GM12878 (cell line): ENCODE measurements at regions of chr16 and their contacts with region 1.

Region 1: DNA sequence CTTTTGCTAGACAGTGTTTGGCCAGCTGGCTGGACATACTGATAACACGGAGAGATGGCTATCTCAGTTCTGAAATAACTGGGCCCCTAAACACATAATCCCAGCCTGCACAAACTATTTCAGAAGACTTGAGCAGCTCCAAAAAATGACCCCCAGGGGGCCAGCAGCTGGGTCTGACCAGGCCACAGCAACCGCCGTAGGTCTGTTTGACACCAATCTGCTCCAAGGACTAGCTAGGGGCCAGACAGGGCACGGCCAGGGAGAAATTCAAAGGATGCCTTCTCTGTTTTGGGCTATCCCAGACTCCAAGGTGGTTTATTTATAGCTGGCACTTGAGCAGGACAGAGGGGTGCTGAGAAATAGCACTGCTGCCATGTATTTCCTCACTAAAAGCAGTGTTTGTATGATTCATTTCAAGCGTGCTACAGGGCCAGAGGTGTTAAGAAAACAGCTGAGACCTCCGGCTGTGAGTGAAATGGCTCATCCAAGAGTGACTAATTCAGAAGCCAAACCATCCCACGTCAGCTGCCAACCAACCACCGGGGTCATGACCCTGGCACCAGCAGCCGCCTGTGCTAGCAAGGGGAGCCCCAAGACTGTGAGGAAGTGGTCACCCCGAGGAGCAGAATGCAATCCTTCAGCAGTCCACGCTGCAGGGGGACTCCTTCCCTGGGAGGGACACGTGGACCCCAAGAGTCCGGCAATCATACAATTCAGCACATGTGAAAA is 5.7 kb downstream of the GGA2 start:
- DNase-seq: peak; percentile 77
- ATAC-seq: peak; percentile 76
- H3K4me3 ChIP-seq: peak overlapping the region; percentile 68
- H3K27ac ChIP-seq: peak overlapping the region; percentile 86
- H3K4me1 ChIP-seq: peaks cover 48% of the 10 kb centered on the region
- H3K27me3 ChIP-seq: no peaks in the 10 kb centered on the region
- CTCF ChIP-seq: 0 out of 6 replicates have a peak, but pooled peaks of 1 of the 3 experiments have one; percentile 23
- EP300 ChIP-seq: peak; percentile 73 to 86; a peak in 3 of 4 replicates
- POLR2A ChIP-seq: peak; percentile 31; the same call in 1 of the 2 replicates
- RAD21 ChIP-seq: no peak

Region 2: DNA sequence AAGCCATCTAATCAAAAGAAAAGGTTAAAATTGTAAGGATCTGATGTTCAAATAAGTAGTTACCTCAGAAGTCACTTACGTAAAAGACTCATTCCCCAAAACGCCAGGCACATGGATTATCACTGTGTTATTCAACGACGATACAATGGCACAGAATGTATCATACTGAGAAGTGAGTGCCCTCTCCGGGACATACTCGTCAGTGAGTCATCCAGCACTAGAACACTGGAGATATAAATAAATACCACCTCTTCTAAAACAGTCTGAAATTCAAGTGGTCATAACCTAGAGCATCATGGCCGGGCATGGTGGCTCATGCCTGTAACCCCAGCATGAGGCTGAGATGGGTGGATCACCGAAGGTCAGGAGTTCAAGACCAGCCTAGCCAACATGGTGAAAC is 380.3 kb before region 1 on chr16:
- CTCF ChIA-PET with region 1: no interaction called
- POLR2A ChIA-PET with region 1: no interaction called
- RAD21 ChIA-PET with region 1: no interaction called
- SMC1A ChIA-PET with region 1: no interaction called
- in situ Hi-C with region 1: no loop called
- intact Hi-C with region 1: no loop called
- DNase-seq: no peak
- ATAC-seq: no peak
- H3K4me3 ChIP-seq: no peak overlapping the region
- H3K27ac ChIP-seq: no peak overlapping the region
- H3K4me1 ChIP-seq: no peaks in the 10 kb centered on the region
- H3K27me3 ChIP-seq: no peaks in the 10 kb centered on the region
- CTCF ChIP-seq: no peak
- EP300 ChIP-seq: no peak
- POLR2A ChIP-seq: no peak
- RAD21 ChIP-seq: no peak

Region 3: GRCh38 chr16:23227529-23227928 is 277.1 kb before region 1 on chr16:
- CTCF ChIA-PET with region 1: no interaction called
- POLR2A ChIA-PET with region 1: no interaction called
- RAD21 ChIA-PET with region 1: no interaction called
- SMC1A ChIA-PET with region 1: no interaction called
- in situ Hi-C with region 1: no loop called
- intact Hi-C with region 1: no loop called
- DNase-seq: no peak
- ATAC-seq: no peak
- H3K4me3 ChIP-seq: no peak overlapping the region
- H3K27ac ChIP-seq: no peak overlapping the region
- H3K4me1 ChIP-seq: no peaks in the 10 kb centered on the region
- H3K27me3 ChIP-seq: no peaks in the 10 kb centered on the region; a peak in 1 of 4 replicates
- CTCF ChIP-seq: no peak
- EP300 ChIP-seq: no peak
- POLR2A ChIP-seq: no peak
- RAD21 ChIP-seq: no peak

Region 4: GRCh38 chr16:23296994-23297393 is 207.6 kb before region 1 on chr16:
- CTCF ChIA-PET with region 1: no interaction called
- POLR2A ChIA-PET with region 1: no interaction called
- RAD21 ChIA-PET with region 1: no interaction called
- SMC1A ChIA-PET with region 1: no interaction called
- in situ Hi-C with region 1: no loop called
- intact Hi-C with region 1: loop called (anchors 5 kb)
- DNase-seq: no peak
- ATAC-seq: peak; percentile 77
- H3K4me3 ChIP-seq: no peak overlapping the region
- H3K27ac ChIP-seq: no peak overlapping the region
- H3K4me1 ChIP-seq: peaks cover 7% of the 10 kb centered on the region; the same call in 1 of the 2 replicates
- H3K27me3 ChIP-seq: peaks cover 0 to 3% of the 10 kb centered on the region in 2 experiments; a peak in 2 of 4 replicates
- CTCF ChIP-seq: peak; percentile 32 to 48 (median 37); a peak in 4 of 6 replicates
- EP300 ChIP-seq: no peak
- POLR2A ChIP-seq: no peak
- RAD21 ChIP-seq: peak; percentile 63

Region 5: DNA sequence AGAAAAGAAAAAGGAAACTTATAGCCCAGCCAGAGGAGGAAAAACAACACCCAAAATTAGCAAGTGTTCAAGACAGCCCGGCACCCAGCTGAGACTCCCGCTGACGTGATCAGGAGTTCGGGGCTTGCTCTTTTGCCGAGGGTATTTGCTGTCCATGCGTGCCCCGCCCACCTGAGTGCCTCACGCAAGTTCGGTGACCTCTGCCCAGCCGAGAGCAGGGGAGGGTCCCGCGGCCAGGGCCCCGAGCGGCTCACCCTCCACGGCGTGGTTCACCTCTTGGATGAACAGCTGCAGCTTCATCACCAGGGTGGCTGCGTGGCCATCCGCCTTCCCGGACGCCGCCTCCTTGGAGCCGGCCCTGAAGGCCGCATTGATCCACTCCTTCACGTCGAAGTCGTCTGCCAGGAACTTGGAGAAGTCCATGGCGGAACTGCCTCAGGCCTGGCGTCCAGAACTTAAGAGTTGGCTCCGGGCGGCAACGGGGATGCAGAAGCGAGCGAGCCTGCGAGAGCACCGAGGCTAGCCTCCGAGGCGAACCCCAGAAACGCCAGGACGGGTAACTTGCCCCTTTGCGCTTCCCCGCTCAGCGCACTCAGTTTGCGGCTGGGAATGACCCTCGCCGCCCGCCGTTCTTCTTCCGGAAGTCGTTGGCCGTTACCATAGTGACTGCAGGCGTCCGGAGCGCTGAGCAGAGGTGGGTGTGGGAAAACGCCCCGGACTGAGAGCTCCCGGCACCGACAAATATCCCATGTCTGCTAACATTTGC is 51.9 kb before region 1 on chr16 and contains the start of gene COG7:
- CTCF ChIA-PET with region 1: interaction called, 14 read pairs
- POLR2A ChIA-PET with region 1: interaction called, 3 read pairs
- RAD21 ChIA-PET with region 1: no interaction called
- SMC1A ChIA-PET with region 1: interaction called, 4 read pairs
- in situ Hi-C with region 1: no loop called
- intact Hi-C with region 1: loop called (anchors 5 kb)
- DNase-seq: peak; percentile 32
- ATAC-seq: peak; percentile 96
- H3K4me3 ChIP-seq: peak within 1 kb of the TSS; percentile 79
- H3K27ac ChIP-seq: peak within 1 kb of the TSS; percentile 58
- H3K4me1 ChIP-seq: 0 out of 2 replicates have a peak, but pooled peaks cover 4% of the 10 kb centered on the region
- H3K27me3 ChIP-seq: no peaks in the 10 kb centered on the region
- CTCF ChIP-seq: no peak
- EP300 ChIP-seq: no peak
- POLR2A ChIP-seq: peak; percentile 72
- RAD21 ChIP-seq: no peak
- polyA plus RNA-seq, gene COG7: 2.9 to 7.5 TPM

Region 6: DNA sequence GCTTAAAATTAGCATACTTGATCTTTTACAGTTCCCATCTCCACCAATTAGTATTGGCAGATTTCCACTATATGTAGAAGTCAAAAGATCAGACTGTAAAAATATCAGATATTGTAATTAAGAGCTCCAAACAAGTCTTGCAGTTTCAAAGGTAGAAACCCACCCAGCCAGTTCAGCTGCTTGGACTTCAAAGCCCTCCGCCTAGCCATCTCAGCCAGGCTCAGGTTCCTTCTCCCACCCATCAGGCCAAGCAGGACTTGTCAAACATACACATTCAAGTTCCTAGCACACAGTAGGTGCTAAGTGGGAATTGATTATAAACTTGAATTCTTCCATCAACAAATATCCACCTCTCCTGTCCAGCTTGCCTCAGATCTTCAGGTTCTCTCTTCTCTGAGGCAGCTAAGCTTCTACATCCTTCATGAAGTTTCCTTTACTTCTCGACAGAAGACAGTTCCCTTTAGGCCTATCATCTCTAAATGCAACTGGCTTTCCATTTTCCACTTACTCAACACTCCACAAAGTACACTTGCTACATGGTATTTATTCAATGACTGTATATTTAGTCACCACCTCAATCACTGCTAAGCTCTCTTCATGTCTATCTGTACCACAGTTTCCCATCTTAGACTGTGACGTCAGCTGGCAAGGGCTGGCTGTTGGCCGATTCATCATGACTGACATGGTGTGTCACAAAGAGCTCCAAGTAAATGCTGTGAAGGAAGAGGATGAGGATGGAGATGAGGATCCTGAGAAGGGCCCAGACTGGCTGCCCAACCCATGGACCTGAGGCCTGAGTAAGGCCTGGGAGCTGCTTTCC is 38.3 kb before region 1 on chr16:
- CTCF ChIA-PET with region 1: interaction called, 3 read pairs
- POLR2A ChIA-PET with region 1: no interaction called
- RAD21 ChIA-PET with region 1: no interaction called
- SMC1A ChIA-PET with region 1: no interaction called
- in situ Hi-C with region 1: no loop called
- intact Hi-C with region 1: loop called (anchors 5 kb)
- DNase-seq: no peak
- ATAC-seq: no peak
- H3K4me3 ChIP-seq: no peak overlapping the region
- H3K27ac ChIP-seq: no peak overlapping the region
- H3K4me1 ChIP-seq: no peaks in the 10 kb centered on the region
- H3K27me3 ChIP-seq: no peaks in the 10 kb centered on the region
- CTCF ChIP-seq: no peak
- EP300 ChIP-seq: no peak
- POLR2A ChIP-seq: no peak
- RAD21 ChIP-seq: no peak

Region 7: DNA sequence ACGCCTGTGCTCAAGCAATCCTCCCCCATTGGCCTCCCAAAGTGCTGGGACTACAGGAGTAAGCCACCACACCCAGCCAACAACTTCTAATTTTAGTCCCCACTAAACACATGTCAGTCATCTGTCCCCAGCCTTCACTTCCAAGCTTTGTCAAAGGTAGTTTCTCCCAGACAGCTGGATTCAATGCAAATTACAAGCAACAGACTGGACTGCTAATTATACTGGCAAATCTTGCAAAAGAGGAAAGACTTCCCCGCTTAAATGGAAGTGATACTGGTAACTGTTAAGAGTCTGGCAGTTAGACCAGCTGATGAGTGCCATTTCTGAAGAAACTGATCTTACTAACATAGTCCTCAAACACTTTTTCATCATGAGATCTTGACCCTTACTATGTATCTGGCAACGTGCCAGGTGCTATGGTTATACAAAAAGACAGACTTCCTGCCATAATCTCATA is 13.8 kb after region 1 on chr16:
- CTCF ChIA-PET with region 1: interaction called, 3 read pairs
- POLR2A ChIA-PET with region 1: interaction called, 6 read pairs
- RAD21 ChIA-PET with region 1: interaction called, 7 read pairs
- SMC1A ChIA-PET with region 1: interaction called, 48 read pairs
- in situ Hi-C with region 1: no loop called
- intact Hi-C with region 1: no loop called
- DNase-seq: no peak
- ATAC-seq: peak; percentile 77
- H3K4me3 ChIP-seq: no peak overlapping the region
- H3K27ac ChIP-seq: peak overlapping the region; percentile 71
- H3K4me1 ChIP-seq: peaks cover 33% of the 10 kb centered on the region
- H3K27me3 ChIP-seq: no peaks in the 10 kb centered on the region
- CTCF ChIP-seq: no peak
- EP300 ChIP-seq: no peak
- POLR2A ChIP-seq: no peak
- RAD21 ChIP-seq: no peak

Region 8: DNA sequence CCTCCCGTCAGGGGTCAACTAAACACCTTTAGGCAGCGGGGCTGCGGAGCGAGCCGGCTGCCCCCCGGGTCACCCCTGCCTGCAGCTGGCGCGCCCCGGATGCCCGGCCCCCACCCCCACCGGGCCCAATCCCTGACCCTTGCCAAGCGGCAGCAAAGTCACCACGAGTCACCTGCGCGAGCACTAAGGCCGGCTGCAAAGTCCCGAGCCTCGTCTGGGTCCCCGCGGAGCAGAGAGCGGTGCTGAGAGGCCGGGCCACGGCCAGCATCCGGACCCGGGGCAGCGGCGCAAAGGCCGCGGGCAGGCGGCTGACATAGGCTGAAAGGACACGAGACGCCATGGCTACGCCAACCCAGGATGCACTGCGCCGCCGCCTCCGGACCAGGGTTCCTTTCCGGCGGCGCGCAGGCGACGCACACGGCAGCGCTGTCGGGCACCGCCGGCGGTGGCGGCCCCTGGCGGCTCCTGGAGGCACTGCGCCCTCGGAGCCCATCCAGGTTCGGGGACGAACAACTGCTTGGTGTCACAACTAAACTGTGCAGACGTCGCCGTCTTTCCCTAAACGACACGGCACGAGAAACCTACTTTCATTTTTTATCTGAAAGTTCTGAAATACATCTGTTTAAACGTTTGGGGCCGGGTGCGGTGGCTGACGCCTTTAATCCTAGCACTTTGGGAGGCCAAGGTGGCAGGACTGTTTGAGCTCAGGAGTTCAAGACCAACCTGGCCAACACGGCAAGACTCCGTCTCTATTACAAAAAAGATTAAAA is 91.5 kb after region 1 on chr16 and contains the start of gene NDUFAB1:
- CTCF ChIA-PET with region 1: interaction called, 8 read pairs
- POLR2A ChIA-PET with region 1: no interaction called
- RAD21 ChIA-PET with region 1: interaction called, 6 read pairs
- SMC1A ChIA-PET with region 1: interaction called, 3 read pairs
- in situ Hi-C with region 1: no loop called
- intact Hi-C with region 1: loop called (anchors 5 kb)
- DNase-seq: peak; percentile 51
- ATAC-seq: peak; percentile 99
- H3K4me3 ChIP-seq: peak within 1 kb of the TSS; percentile 82
- H3K27ac ChIP-seq: peak within 1 kb of the TSS; percentile 77
- H3K4me1 ChIP-seq: peaks cover 16% of the 10 kb centered on the region
- H3K27me3 ChIP-seq: no peaks in the 10 kb centered on the region
- CTCF ChIP-seq: peak; percentile 93 to 99 (median 99)
- EP300 ChIP-seq: no peak
- POLR2A ChIP-seq: peak; percentile 89
- RAD21 ChIP-seq: no peak
- polyA plus RNA-seq, gene NDUFAB1: 99.8 to 226 TPM